Heart right ventricle (tissue), 16 donors: ENCODE measurements at regions of chr6 and their contacts with region 1.

Region 1: DNA sequence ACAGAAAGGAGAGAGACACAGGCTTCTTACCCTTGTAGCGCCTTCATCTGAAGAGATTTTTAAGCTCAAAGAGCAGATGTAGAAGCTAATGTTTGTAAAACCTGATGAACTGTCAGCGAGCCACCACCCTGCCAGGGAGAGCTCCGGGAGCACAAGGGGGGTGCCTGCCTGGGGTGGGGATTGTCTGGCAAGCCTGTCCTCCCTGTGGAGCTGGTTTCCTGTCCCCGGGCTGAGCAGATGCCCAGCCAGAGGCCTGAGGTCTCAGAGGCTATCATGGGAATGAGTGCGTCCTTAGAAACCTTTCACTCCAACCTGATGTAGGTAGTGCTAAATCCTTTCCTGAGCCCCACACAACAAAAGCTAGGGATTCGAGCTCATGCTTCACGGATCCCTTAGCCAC is 41.9 kb upstream of the NR2E1 start:
- DNase-seq: no peak
- ATAC-seq: no peak
- H3K4me3 ChIP-seq: no peak overlapping the region
- H3K27ac ChIP-seq: no peak overlapping the region
- H3K4me1 ChIP-seq: peaks cover 3 to 15% (median 9%) of the 10 kb centered on the region in 9 donors
- H3K27me3 ChIP-seq: peaks cover 12 to 100% (median 93%) of the 10 kb centered on the region in 7 donors
- CTCF ChIP-seq: no peak

Region 2: GRCh38 chr6:107928984-107929383 is 195.0 kb before region 1 on chr6:
- intact Hi-C with region 1: no loop called
- DNase-seq: no peak
- ATAC-seq: no peak
- H3K4me3 ChIP-seq: no peak overlapping the region
- H3K27ac ChIP-seq: no peak overlapping the region
- H3K4me1 ChIP-seq: no peaks in the 10 kb centered on the region
- H3K27me3 ChIP-seq: no peaks in the 10 kb centered on the region
- CTCF ChIP-seq: no peak

Region 3: DNA sequence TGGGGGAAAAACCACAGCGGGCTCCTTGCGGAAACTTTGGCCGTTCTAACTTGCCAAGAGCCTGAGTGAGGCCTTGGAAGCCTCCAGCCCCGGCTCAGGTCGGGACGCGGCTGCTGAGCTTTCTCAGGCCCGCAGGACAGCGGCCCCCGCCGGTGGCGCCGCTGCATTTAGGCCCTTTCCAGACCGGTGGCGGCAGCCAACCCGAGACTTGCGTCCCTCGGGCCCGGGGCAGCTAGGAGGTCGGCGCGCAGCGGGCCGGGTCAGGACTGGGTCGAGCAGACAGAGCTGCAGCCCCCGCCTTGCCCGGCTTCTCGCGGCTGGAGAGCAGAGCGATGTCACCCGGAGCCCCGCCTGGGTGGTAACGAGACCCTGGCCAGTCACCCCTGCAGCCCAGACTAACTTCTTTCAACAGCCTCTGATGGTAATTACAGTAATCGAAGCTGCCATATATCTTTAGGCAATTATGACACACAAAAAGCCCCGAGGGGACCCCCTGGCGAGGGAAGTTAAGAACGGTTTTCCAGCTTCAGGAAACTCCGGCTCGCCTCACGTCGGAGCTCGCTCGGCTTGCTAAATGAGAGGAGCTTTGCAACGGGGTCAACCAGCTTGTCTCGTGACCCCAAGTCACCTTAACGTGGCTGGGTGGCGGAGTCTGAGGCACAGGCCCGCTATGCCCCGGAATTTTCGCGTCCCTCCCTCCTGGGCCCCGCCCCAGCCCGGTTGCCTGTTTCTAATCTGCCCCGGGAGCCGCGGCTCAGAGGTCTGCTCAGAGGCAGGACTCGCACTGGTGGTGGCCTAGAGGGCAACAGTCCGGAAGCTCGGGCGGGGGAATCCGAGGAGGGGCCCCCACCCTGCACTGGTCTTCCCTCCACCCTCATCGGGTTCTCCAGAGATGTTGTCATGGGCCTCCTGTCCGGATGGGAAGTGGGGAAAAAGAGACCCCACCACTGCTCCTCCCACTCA is 44.8 kb after region 1 on chr6:
- intact Hi-C with region 1: loop called in 1 of 10 experiments (anchors 5 kb)
- DNase-seq: peak in 1 of 2 donors; percentile 18
- ATAC-seq: peak; percentile 48 to 79 (median 68)
- H3K4me3 ChIP-seq: peak overlapping the region in 9 of 10 donors; percentile 14 to 35 (median 33)
- H3K27ac ChIP-seq: no peak overlapping the region
- H3K4me1 ChIP-seq: peaks cover 13 to 67% (median 54%) of the 10 kb centered on the region in 9 donors
- H3K27me3 ChIP-seq: peaks cover 56 to 100% (median 100%) of the 10 kb centered on the region in 7 donors
- CTCF ChIP-seq: peak in 7 of 9 donors; percentile 12 to 54 (median 45)